BJ (cell line): ENCODE measurements at regions of chr7 and their contacts with region 1.

Region 1: DNA sequence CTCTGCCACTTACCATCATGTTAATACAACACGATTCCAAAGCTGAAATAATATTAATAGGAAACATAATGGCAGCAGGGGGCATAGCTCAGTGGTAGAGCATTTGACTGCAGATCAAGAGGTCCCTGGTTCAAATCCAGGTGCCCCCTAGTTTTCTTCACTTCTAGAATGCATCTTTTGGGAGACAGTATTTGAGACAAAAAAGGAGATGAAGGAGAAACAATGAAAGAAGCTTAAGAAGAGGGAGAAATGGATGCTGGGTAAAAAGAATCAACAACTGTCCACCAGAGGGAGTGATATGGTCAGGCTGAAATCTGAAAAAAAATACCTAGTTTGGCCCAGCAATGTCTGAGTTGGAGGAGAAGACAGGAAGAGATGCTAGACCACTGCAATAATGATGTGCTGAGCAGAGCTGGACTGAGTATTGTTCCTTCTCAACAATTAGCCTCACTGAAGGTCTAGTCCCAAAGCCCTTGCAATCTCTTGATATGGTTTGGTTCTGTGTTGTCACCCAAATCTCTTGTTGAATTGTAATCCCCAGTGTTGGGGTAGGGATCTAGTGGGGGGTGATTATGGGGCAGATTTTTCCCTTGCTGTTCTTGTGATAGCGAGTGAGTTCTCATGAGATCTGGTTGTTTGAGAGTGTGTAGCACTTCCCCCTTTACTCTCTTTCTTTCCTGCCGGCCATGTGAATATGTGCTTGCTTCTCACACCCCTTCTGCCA is 48.3 kb downstream of the ZNF783 start:
- DNase-seq: peak; percentile 22
- H3K4me3 ChIP-seq: no peak overlapping the region
- H3K27me3 ChIP-seq: peaks cover 2% of the 10 kb centered on the region
- CTCF ChIP-seq: peak; percentile 65

Region 2: DNA sequence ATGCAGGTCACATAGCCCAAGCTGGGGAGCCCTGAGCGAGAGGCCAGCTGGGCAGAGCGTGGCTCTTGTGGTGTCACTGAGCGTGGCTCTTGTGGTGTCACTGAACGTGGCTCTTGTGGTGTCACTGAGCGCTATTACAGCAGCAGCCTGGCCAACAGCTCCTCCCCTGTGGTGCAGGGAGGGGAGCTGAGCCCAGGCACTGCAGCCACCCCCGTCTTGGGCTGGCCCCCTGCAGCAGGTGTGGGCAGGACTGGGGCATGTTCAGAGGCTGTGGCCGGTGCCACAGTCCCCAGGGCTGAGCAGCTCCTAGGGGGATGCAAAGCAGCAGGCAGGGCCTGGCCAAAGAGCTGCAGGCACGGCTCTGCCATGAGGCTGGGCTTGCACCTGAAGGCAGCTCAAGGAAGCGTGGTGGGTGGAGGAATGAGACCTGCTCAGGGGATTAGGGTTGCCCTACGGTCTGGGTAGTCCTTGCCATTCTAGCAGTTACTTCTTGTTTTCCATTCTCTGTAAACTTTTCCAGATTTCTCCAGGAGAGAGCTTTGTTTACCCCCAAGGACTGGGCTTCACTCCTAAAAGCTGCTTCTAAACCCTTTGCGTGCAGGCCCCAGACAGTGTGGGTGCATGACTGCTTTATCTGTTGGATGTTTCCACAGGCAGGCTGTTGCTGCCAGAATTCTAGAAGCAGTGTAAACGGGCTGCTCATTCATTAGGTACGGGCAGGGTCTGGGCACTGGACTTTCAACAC is 19.1 kb before region 1 on chr7:
- CTCF ChIA-PET with region 1: interaction called, 14 read pairs
- POLR2A ChIA-PET with region 1: no interaction called
- DNase-seq: no peak
- H3K4me3 ChIP-seq: no peak overlapping the region
- H3K27me3 ChIP-seq: no peaks in the 10 kb centered on the region
- CTCF ChIP-seq: no peak

Region 3: DNA sequence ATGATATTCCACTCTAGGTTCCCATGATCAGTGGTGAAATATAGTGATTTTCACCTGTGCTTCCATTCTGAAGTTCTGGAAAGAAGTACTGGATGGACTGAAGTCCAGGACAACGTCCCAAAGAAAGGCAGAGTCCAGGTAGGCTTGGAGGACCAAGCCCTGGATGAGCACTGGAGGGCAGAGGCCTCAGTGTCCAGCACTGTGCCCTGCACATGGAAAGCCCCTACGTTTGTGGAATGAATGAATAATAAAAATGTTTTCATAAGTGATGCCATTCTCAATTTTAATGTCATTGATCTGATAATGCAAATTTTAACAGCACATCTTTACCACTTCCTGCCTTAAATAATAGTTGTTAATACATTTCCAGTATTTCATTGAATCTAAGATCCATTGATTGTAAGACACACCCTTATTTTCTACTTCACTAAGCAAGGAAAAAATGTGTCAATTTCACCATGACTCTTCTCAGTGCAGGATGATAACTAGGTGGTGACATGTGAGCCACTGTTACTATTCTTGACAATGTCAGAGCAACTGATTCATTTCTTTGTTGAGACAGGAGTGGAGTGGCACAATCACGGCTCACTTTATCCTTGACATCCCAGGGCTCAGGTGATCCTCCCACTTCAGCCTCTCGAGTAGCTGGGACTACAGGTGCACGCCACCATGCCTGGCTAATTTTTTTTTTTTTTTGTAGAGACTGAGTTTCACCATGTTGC is 13.1 kb before region 1 on chr7:
- CTCF ChIA-PET with region 1: interaction called, 14 read pairs
- POLR2A ChIA-PET with region 1: no interaction called
- DNase-seq: no peak
- H3K4me3 ChIP-seq: no peak overlapping the region
- H3K27me3 ChIP-seq: peaks cover 2% of the 10 kb centered on the region; the same call in 1 of the 2 replicates
- CTCF ChIP-seq: no peak